Breast epithelium (tissue), 4 donors: ENCODE measurements at regions of chr12 and their contacts with region 1.

Region 1: DNA sequence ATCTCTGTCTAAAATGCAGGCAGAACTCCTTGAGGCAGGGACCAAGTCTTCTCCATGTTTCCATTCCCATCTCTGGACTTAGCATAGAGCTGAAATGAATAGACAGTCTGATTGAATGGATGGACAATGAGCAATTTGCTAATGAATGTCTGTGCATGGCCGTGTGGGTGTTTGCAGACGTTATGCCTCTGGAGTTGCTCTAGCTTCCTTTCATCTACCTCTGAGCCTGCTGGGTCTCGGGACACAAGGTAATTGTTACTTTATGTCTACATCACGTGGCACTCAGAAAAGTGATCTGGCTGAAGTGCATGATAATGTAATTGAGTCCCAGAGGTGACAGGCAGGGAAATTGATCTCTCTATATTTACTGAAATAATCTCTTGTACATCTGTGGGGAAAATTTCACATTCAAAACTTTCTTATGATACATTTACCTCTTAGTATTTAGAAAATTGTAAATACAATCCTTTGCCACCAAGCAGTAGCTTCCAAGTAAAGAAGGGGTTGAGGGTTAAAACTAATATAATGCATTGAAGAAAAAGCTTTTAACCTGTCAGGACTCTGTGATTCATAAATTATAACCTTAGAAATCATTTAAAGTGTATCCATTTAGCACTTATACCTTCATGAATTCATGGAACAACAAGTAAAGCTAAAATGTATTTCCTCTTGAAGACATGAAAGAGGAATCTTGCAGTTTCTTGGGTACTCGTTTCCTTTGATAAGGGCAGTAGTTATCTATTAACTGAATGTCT is 424.1 kb downstream of the APAF1 start:
- DNase-seq: no peak
- H3K4me3 ChIP-seq: no peak overlapping the region
- H3K27ac ChIP-seq: no peak overlapping the region
- H3K4me1 ChIP-seq: no peaks in the 10 kb centered on the region
- H3K27me3 ChIP-seq: no peaks in the 10 kb centered on the region
- CTCF ChIP-seq: no peak
- POLR2A ChIP-seq: no peak

Region 2: GRCh38 chr12:99049774-99050173 is 19.4 kb before region 1 on chr12:
- intact Hi-C with region 1: no loop called
- DNase-seq: no peak
- H3K4me3 ChIP-seq: no peak overlapping the region
- H3K27ac ChIP-seq: no peak overlapping the region
- H3K4me1 ChIP-seq: no peaks in the 10 kb centered on the region
- H3K27me3 ChIP-seq: no peaks in the 10 kb centered on the region
- CTCF ChIP-seq: no peak
- POLR2A ChIP-seq: no peak

Region 3: GRCh38 chr12:99309812-99310211 is 240.6 kb after region 1 on chr12:
- intact Hi-C with region 1: loop called (anchors 5 kb)
- DNase-seq: no peak
- H3K4me3 ChIP-seq: no peak overlapping the region
- H3K27ac ChIP-seq: no peak overlapping the region
- H3K4me1 ChIP-seq: no peaks in the 10 kb centered on the region
- H3K27me3 ChIP-seq: no peaks in the 10 kb centered on the region
- CTCF ChIP-seq: no peak
- POLR2A ChIP-seq: no peak

Region 4: GRCh38 chr12:100868487-100868886 is 1799.3 kb after region 1 on chr12:
- intact Hi-C with region 1: no loop called
- DNase-seq: no peak
- H3K4me3 ChIP-seq: no peak overlapping the region
- H3K27ac ChIP-seq: no peak overlapping the region
- H3K4me1 ChIP-seq: no peaks in the 10 kb centered on the region
- H3K27me3 ChIP-seq: no peaks in the 10 kb centered on the region
- CTCF ChIP-seq: no peak
- POLR2A ChIP-seq: no peak